CD8-positive, alpha-beta T cell (primary cell): ENCODE measurements at regions of chr11 and their contacts with region 1.

Region 1: DNA sequence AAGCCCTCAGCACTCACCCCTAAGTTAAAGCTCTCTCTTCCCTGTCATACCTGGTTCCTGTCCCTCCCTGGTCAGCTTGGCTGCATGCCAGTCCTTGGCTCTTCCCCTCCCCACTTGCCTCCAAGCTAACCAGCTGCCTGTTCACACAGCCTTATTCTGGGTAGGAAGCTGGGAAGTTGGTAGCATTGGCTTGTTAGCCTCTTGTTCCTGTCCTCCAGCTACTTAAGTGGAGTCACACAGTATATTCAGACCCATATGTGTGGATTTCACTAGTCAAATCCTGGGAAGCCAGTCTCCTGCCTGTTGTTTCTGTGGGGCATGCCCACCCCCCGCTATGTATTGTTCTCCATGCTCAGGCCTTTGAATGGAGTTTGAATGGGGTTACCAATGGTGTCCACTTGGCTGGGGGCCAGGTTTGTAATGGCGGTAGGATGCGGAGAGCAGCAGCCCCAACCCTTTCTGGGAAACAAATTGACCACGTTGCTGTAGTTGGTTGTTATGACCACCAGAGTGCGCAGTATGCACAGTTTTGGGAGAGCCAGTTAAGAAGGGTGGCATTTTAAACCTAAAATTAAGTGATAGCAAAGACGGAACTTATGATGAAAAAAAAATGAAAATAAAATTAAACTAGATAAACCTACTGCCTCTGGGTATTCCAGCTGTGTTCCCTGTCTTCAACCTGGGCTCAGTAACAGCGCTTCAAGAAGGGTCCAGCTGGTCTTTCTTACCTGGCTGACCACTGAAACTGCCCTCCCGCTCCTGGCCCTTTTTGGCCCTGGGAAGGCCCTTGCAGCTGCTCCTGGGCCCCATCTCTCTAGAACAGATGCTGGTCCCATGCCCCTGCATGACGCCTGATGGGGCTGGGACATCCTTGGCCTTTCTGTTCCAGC is 10.7 kb upstream of the RPS3 start:
- DNase-seq: peak; percentile 39 to 87 (median 64)
- ATAC-seq: peak; percentile 93
- H3K4me3 ChIP-seq: no peak overlapping the region
- H3K4me3 Mint-ChIP-seq: no peak overlapping the region
- H3K27ac ChIP-seq: no peak overlapping the region
- H3K27ac Mint-ChIP-seq: no peak overlapping the region
- H3K4me1 ChIP-seq: peaks cover 15% of the 10 kb centered on the region
- H3K4me1 Mint-ChIP-seq: peaks cover 11% of the 10 kb centered on the region
- H3K27me3 ChIP-seq: no peaks in the 10 kb centered on the region
- H3K27me3 Mint-ChIP-seq: no peaks in the 10 kb centered on the region
- CTCF ChIP-seq: peak; percentile 81

Region 2: DNA sequence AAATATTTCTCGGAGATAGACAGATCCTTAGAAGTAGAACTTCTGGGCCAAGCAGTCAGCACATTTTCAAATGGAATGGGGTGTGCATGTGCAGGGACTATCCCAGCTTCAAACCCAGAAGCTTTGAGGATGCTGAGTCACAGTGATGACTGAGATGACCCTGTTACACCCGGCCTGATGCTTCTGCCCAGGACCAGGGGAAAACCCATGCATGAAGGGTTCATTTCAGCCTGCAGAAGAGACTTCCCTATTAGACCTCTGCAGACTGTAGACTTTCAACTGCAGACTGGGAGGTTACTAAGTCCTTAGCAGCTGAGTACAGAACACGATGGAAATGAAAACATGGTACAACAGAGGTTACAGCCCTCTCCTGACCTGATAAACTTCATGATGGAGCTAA is 288.3 kb before region 1 on chr11:
- CTCF ChIA-PET with region 1: no interaction called
- POLR2A ChIA-PET with region 1: no interaction called
- intact Hi-C with region 1: no loop called
- DNase-seq: peak in 1 of 9 experiments; percentile 13
- ATAC-seq: no peak
- H3K4me3 ChIP-seq: no peak overlapping the region
- H3K4me3 Mint-ChIP-seq: no peak overlapping the region
- H3K27ac ChIP-seq: no peak overlapping the region
- H3K27ac Mint-ChIP-seq: no peak overlapping the region
- H3K4me1 ChIP-seq: no peaks in the 10 kb centered on the region
- H3K4me1 Mint-ChIP-seq: no peaks in the 10 kb centered on the region
- H3K27me3 ChIP-seq: no peaks in the 10 kb centered on the region
- H3K27me3 Mint-ChIP-seq: peaks cover 41% of the 10 kb centered on the region
- CTCF ChIP-seq: no peak

Region 3: DNA sequence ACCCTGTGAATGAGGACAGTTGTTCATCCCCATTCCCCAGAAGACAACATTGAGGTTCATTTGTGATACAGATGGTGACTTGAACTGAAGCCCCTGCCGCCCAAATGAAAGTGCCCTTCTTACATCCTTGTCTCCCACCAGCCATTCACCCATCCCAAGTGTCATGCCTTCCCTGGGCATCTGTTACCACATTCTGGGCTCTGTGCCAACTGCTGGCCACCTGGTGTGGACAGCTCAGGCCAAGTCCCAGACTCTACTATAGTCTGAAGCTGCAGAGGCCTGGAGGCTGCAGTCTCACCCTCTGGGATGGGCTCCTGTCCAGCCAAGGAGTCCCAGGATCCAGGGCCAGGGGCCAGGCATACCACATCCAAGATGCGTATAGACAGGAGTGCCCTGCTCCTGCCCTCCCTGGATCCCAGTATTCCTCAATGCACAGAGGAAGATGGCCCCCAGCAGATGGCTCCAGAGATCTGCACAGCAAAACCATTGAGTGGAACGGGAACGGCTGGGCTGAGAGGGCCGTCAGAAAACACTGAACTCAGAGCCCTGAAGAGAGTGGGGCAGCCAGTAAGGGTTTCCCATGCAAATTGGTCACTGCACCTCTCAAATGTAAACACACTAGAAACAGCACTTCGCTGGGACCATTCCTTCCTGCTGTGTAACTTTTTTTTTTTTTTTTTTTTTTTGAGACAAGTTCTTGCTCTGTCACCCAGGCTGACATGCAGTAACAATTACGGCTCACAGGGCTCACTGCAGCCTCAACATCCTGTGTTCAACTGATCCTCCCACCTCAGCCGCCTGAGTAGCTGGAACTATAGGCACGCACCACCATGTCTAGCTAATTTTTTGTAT is 60.0 kb before region 1 on chr11:
- CTCF ChIA-PET with region 1: interaction called, 122 read pairs
- POLR2A ChIA-PET with region 1: no interaction called
- intact Hi-C with region 1: loop called (anchors 1 kb)
- DNase-seq: peak in 8 of 9 experiments; percentile 48 to 79 (median 64)
- ATAC-seq: peak; percentile 93
- H3K4me3 ChIP-seq: no peak overlapping the region
- H3K4me3 Mint-ChIP-seq: peak overlapping the region; percentile 58
- H3K27ac ChIP-seq: peak overlapping the region; percentile 37 to 47
- H3K27ac Mint-ChIP-seq: peak overlapping the region; percentile 90
- H3K4me1 ChIP-seq: peaks cover 60% of the 10 kb centered on the region
- H3K4me1 Mint-ChIP-seq: peaks cover 69% of the 10 kb centered on the region
- H3K27me3 ChIP-seq: no peaks in the 10 kb centered on the region
- H3K27me3 Mint-ChIP-seq: no peaks in the 10 kb centered on the region
- CTCF ChIP-seq: no peak

Region 4: DNA sequence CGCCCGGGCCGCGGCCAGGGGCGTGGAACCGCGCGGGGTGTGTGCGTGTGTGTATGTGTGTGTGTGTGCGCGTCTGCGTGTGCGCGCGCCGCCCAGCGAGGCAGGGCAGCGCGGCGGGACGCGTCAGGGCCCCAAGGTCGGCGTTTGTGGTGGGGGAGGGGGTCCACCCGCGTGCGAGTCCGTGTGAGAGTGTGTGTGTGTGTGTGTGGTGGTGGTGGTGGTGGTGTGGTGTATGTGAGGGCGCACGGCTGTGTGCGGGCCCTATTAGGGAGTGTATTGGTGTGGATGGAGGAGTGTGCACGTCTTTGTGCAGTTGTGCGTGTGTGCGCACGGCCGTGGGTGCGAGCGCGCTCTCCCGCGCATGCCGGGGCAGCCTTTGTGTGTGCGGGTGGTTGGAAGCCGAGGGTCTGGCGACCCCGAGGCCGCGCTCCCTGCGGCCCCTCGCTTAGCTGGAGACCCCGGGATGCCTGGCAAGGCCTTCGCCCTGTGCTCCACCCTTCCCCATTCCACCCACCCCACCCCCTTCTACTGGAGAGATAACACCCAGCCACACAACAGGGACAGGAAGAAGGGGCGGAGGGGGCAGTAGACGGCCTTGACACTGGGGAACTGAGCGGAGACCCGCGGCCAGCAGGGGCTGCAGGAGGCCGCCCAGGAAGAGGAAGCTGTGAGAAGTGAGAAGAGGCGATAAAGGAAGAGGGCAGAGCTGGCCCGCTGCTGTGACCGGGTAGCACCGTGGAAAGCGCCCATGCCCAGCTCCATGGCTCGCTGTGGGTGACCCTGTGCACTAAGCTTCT is 36.6 kb before region 1 on chr11:
- CTCF ChIA-PET with region 1: interaction called, 19 read pairs
- POLR2A ChIA-PET with region 1: interaction called, 8 read pairs
- intact Hi-C with region 1: loop called in 1 of 2 experiments (anchors 1 kb)
- DNase-seq: peak; percentile 30 to 83 (median 59)
- ATAC-seq: peak; percentile 67
- H3K4me3 ChIP-seq: peak overlapping the region; percentile 68 to 95
- H3K4me3 Mint-ChIP-seq: peak overlapping the region; percentile 93
- H3K27ac ChIP-seq: peak overlapping the region; percentile 63 to 74
- H3K27ac Mint-ChIP-seq: peak overlapping the region; percentile 89
- H3K4me1 ChIP-seq: peaks cover 60% of the 10 kb centered on the region
- H3K4me1 Mint-ChIP-seq: peaks cover 64% of the 10 kb centered on the region
- H3K27me3 ChIP-seq: no peaks in the 10 kb centered on the region
- H3K27me3 Mint-ChIP-seq: no peaks in the 10 kb centered on the region
- CTCF ChIP-seq: no peak

Region 5: GRCh38 chr11:75428281-75428724 is 39.7 kb after region 1 on chr11:
- CTCF ChIA-PET with region 1: interaction called, 3 read pairs
- POLR2A ChIA-PET with region 1: no interaction called
- intact Hi-C with region 1: loop called in 1 of 2 experiments (anchors 5 kb)
- DNase-seq: peak in 8 of 9 experiments; percentile 27 to 84 (median 62)
- ATAC-seq: peak; percentile 64
- H3K4me3 ChIP-seq: peak overlapping the region; percentile 13 to 22
- H3K4me3 Mint-ChIP-seq: peak overlapping the region; percentile 61
- H3K27ac ChIP-seq: no peak overlapping the region
- H3K27ac Mint-ChIP-seq: no peak overlapping the region
- H3K4me1 ChIP-seq: peaks cover 9% of the 10 kb centered on the region
- H3K4me1 Mint-ChIP-seq: peaks cover 16% of the 10 kb centered on the region
- H3K27me3 ChIP-seq: peaks cover 11 to 13% of the 10 kb centered on the region in 2 experiments
- H3K27me3 Mint-ChIP-seq: peaks cover 34% of the 10 kb centered on the region
- CTCF ChIP-seq: no peak

Region 6: GRCh38 chr11:75450826-75451821 is 62.5 kb after region 1 on chr11:
- CTCF ChIA-PET with region 1: interaction called, 25 read pairs
- POLR2A ChIA-PET with region 1: no interaction called
- intact Hi-C with region 1: no loop called
- DNase-seq: peak in 5 of 9 experiments; percentile 27 to 53 (median 42)
- ATAC-seq: no peak
- H3K4me3 ChIP-seq: no peak overlapping the region
- H3K4me3 Mint-ChIP-seq: no peak overlapping the region
- H3K27ac ChIP-seq: no peak overlapping the region
- H3K27ac Mint-ChIP-seq: no peak overlapping the region
- H3K4me1 ChIP-seq: no peaks in the 10 kb centered on the region
- H3K4me1 Mint-ChIP-seq: no peaks in the 10 kb centered on the region
- H3K27me3 ChIP-seq: no peaks in the 10 kb centered on the region
- H3K27me3 Mint-ChIP-seq: no peaks in the 10 kb centered on the region
- CTCF ChIP-seq: peak; percentile 48

Region 7: DNA sequence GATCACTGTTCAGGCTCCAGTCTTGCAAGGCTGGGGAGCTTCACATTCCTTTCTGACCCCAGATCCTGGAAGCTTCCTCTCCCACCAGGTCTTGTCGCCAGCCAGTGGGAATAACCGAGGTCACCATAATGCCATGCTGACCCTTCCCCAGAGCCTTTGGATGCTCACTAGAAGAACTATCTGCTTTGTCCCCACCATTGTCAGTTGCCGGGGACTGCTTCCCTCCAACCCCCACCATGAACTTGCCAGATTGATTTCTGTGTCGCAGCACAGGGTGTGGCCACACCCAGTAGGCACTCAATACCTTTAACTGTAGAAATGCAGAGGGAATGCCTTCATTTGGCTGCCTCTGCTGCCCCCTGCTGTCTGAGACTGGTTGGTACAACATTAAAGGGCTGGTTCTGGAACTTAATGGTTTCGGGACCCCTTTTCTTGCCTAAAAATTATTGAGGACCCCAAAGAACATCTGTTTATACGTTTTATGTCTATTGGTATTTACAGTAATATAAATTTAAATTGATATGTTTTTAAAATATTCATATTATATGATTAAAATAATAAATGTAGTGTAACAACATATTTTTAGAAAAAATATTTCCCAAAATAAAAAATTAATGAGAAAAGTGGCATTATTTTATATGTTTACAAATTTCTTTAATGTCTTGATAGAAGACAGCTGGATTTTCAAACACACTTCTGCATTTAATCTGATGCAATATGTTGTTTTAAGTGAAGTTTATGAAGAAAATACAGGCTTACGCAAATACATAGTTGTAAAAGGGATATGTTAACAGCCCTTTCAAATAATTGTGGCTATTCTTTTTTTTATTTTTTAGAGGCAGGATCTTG is 143.8 kb after region 1 on chr11:
- CTCF ChIA-PET with region 1: interaction called, 134 read pairs
- POLR2A ChIA-PET with region 1: interaction called, 4 read pairs
- intact Hi-C with region 1: loop called (anchors 1 kb)
- DNase-seq: peak; percentile 70 to 91 (median 84)
- ATAC-seq: peak; percentile 91
- H3K4me3 ChIP-seq: no peak overlapping the region
- H3K4me3 Mint-ChIP-seq: no peak overlapping the region
- H3K27ac ChIP-seq: no peak overlapping the region
- H3K27ac Mint-ChIP-seq: no peak overlapping the region
- H3K4me1 ChIP-seq: peaks cover 8% of the 10 kb centered on the region
- H3K4me1 Mint-ChIP-seq: peaks cover 31% of the 10 kb centered on the region
- H3K27me3 ChIP-seq: no peaks in the 10 kb centered on the region
- H3K27me3 Mint-ChIP-seq: no peaks in the 10 kb centered on the region
- CTCF ChIP-seq: peak; percentile 98